Activated T-helper 2 cell treated with anti-CD3 and anti-CD28 coated beads, Interferon-gamma antibody, Interleukin-2, Interleukin-4, amounts not matched to agents 10 μg/mL and 5 μg/mL and 100 μg/mL, durations not matched to agents 14 hours and 24 hours and 36 hours (primary cell): ENCODE measurements at regions of chr7 and their contacts with region 1.

Region 1: DNA sequence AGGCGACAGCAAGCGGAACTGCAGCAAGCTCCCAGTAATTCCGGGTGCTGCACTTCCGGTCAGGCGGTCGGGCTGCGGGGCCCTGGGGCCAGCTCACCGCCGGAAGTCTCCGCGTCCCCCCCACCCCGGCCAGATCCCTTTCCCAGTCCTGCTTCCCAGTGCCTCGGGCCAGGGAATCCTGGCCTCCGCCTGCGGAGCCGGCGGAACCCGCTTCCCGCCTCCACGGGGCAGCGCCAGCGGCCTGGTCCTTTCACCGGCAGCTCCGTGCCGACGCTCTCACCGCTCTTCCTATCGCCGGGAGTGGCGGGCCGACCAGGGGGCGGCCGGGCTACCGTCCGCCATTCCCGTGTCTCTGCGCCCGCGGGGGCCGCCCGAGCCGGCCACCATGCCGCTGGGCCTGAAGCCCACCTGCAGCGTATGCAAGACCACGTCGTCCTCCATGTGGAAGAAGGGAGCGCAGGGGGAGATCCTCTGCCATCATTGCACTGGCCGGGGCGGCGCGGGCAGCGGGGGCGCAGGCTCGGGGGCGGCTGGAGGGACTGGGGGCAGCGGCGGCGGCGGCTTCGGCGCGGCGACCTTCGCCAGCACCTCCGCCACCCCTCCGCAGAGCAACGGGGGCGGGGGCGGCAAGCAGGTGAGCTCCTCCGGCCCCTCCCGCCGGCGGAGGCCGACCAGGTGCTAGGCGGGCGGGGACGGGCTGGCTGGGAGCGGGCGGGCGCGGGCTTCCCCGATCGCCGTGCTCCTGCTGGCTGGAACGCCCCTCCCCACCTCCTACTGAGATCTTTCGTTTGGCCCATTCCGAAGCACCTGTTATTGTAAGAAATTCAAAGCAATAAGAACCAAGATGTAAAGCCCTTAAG is at the start of gene GATAD1:
- DNase-seq: peak; percentile 79
- H3K4me3 Mint-ChIP-seq: peak within 1 kb of the TSS; percentile 85
- H3K27ac Mint-ChIP-seq: peak within 1 kb of the TSS; percentile 90
- H3K4me1 Mint-ChIP-seq: peaks cover 15% of the 10 kb centered on the region
- H3K27me3 Mint-ChIP-seq: peaks cover 1% of the 10 kb centered on the region
- total RNA-seq, gene GATAD1: 25.1 and 25.4 TPM in 2 replicates

Region 2: DNA sequence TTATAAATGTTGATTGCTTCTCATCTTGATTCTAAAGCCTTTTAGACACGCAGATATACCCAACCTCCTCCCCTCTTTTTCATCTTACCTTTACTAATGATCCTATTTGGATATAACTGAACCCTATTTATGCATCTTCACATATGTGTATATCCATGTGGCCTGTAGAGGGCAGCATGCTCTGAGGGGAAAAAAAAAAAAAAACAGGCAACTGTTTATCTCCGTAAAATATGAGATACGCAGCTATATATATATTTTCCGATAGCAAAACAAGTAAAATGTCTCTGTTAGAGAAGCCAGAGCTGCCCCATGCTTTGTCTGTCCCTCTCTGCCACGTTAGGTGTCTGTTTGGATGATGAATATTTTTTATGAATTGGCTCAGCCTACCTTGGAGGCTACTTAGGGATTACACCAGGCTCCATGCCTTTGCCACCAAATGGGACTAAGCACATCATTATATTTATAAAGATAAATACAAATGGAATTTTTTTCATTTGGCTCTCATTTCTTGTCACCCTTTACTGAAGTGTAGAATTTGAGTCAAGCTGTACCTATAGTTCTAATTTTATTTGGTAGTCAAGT is 1358.1 kb before region 1 on chr7:
- intact Hi-C with region 1: loop called (anchors 10 kb)
- DNase-seq: no peak
- H3K4me3 Mint-ChIP-seq: no peak overlapping the region
- H3K27ac Mint-ChIP-seq: no peak overlapping the region
- H3K4me1 Mint-ChIP-seq: no peaks in the 10 kb centered on the region
- H3K27me3 Mint-ChIP-seq: peaks cover 2% of the 10 kb centered on the region

Region 3: GRCh38 chr7:91880413-91881241 is 566.9 kb before region 1 on chr7 and contains the start of gene MTERF1:
- intact Hi-C with region 1: loop called (anchors 1 kb)
- DNase-seq: peak; percentile 88
- H3K4me3 Mint-ChIP-seq: peak within 1 kb of the TSS; percentile 95
- H3K27ac Mint-ChIP-seq: peak within 1 kb of the TSS; percentile 93
- H3K4me1 Mint-ChIP-seq: peaks cover 32% of the 10 kb centered on the region
- H3K27me3 Mint-ChIP-seq: no peaks in the 10 kb centered on the region
- total RNA-seq, gene MTERF1: 16.2 and 19.9 TPM in 2 replicates

Region 4: GRCh38 chr7:92134271-92135051 is 313.1 kb before region 1 on chr7 and contains the start of gene CYP51A1:
- intact Hi-C with region 1: loop called (anchors 1 kb)
- DNase-seq: peak; percentile 92
- H3K4me3 Mint-ChIP-seq: peak within 1 kb of the TSS; percentile 99
- H3K27ac Mint-ChIP-seq: peak within 1 kb of the TSS; percentile 99
- H3K4me1 Mint-ChIP-seq: peaks cover 41% of the 10 kb centered on the region
- H3K27me3 Mint-ChIP-seq: no peaks in the 10 kb centered on the region
- total RNA-seq, gene CYP51A1: 133 and 139 TPM in 2 replicates

Region 5: GRCh38 chr7:92245487-92246362 is 201.8 kb before region 1 on chr7 and contains the starts of genes ANKIB1 and KRIT1:
- intact Hi-C with region 1: loop called (anchors 1 kb)
- DNase-seq: peak; percentile 83
- H3K4me3 Mint-ChIP-seq: peak within 1 kb of the TSS; percentile 100
- H3K27ac Mint-ChIP-seq: peak within 1 kb of the TSS; percentile 100
- H3K4me1 Mint-ChIP-seq: peaks cover 30% of the 10 kb centered on the region
- H3K27me3 Mint-ChIP-seq: no peaks in the 10 kb centered on the region
- total RNA-seq, gene ANKIB1: 50.4 and 55.0 TPM in 2 replicates
- total RNA-seq, gene KRIT1: 37.4 and 43.0 TPM in 2 replicates

Region 6: GRCh38 chr7:92496876-92497275 is 49.3 kb after region 1 on chr7:
- intact Hi-C with region 1: no loop called
- DNase-seq: no peak
- H3K4me3 Mint-ChIP-seq: no peak overlapping the region
- H3K27ac Mint-ChIP-seq: no peak overlapping the region
- H3K4me1 Mint-ChIP-seq: peaks cover 6% of the 10 kb centered on the region
- H3K27me3 Mint-ChIP-seq: no peaks in the 10 kb centered on the region

Region 7: GRCh38 chr7:92528188-92528957 is 80.8 kb after region 1 on chr7 and contains the starts of genes PEX1 and RBM48:
- intact Hi-C with region 1: loop called (anchors 2 kb)
- DNase-seq: peak; percentile 96
- H3K4me3 Mint-ChIP-seq: peak within 1 kb of the TSS; percentile 92
- H3K27ac Mint-ChIP-seq: peak within 1 kb of the TSS; percentile 95
- H3K4me1 Mint-ChIP-seq: peaks cover 20% of the 10 kb centered on the region
- H3K27me3 Mint-ChIP-seq: no peaks in the 10 kb centered on the region
- total RNA-seq, gene PEX1: 15.1 TPM in 2 replicates
- total RNA-seq, gene RBM48: 15.2 and 16.8 TPM in 2 replicates